Dendritic cell treated with granulocyte-macrophage colony-stimulating factor and Interleukin-4, amounts not matched to agents 40 ng/mL and 50 ng/mL, for 4 days (primary cell): ENCODE measurements at regions of chr11 and their contacts with region 1.

Region 1: DNA sequence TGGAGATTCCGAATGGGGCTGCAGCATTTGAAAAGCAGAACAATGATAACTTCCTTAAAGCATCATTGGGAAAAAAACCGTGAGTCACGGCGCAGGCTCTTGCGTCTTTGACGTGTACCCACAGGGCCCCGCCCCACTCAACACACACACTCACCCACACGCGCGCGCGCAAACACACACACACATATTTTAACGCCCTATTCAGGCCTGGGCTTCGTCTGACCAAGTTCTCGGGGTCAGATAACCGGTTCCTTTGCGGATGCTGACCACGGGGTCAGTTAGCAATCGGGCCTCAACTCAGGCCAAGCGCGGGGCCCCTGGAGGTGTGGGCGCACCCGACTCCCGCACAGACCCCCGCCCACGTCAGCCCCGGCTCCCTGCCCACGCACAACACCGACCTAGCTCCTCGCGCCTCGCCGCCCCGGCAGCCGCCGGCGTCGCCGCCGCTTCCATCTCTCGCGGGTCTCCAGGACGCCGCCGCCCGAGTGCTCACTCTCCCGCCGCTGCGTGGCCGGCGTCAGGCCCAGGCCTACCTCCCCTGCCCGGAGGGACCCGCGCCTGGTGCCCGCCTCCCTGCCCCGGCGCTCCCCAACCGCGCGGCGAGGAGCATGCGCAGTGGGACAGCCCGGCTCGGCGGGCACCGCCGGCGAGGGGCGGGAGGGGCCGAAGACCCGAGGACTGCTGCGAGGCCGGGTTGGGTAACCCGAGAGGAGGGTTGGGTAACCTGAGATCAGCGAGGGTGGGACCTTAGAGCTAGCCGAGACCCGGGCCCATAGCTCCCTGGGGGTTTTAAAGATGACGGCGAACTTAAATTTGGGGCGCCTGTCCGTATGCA is at the start of gene SLC36A4:
- H3K4me3 Mint-ChIP-seq: peak within 1 kb of the TSS; percentile 87
- H3K27ac Mint-ChIP-seq: peak within 1 kb of the TSS; percentile 96
- H3K4me1 Mint-ChIP-seq: peaks cover 50% of the 10 kb centered on the region
- H3K27me3 Mint-ChIP-seq: no peaks in the 10 kb centered on the region

Region 2: DNA sequence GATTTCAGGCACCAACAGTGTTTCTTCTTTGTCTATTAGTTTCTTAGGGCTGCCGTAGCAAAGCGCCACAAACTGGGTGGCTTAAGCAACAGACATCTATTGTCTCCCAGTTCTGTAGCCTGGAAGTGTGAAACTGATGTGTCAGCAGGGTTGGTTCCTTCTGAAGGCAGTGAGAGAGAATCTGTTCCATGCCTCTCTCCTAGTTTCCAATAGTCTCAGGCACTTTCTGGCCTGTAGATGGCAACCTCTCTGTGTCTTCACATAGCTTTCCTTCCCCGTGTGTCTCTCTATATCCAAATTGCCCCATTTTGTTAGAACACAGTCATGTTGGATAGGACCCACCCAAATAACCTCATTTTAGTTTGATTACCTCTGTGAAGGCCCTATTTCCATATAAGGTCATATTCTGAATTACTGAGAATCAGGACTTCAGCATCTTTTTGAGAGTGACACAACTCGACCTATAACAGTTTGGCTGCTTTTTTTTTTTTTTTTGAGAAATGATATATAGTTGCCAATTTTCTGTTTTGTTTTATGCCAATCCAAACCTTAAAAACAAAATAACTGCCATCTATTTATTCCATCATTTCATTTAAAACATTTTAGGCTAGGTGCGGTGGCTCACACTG is 108.0 kb before region 1 on chr11:
- intact Hi-C with region 1: loop called (anchors 10 kb)
- H3K4me3 Mint-ChIP-seq: no peak overlapping the region
- H3K27ac Mint-ChIP-seq: no peak overlapping the region
- H3K4me1 Mint-ChIP-seq: peaks cover 10% of the 10 kb centered on the region
- H3K27me3 Mint-ChIP-seq: peaks cover 5% of the 10 kb centered on the region

Region 3: DNA sequence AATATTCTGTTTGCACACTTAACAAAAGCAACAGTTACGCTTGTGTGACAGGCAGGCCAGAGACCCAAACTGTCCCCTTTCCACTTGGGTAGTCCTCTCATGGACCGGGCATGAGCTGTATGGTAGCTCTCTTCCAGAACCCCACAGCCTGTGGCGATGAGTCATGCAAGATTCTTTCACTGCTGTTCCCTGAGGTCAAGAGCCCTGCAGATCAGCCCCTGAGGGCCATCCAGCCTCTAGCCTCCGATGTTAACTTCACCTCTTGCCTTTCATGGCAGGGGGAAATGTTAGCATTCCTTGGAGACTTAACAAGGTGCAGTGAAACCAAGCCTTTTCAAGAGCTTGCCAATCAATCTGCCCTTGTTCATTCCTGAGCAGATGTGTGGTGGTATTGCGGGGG is 69.8 kb after region 1 on chr11:
- intact Hi-C with region 1: no loop called
- H3K4me3 Mint-ChIP-seq: no peak overlapping the region
- H3K27ac Mint-ChIP-seq: no peak overlapping the region
- H3K4me1 Mint-ChIP-seq: no peaks in the 10 kb centered on the region
- H3K27me3 Mint-ChIP-seq: no peaks in the 10 kb centered on the region

Region 4: GRCh38 chr11:93295921-93296575 is 98.5 kb after region 1 on chr11:
- intact Hi-C with region 1: no loop called
- H3K4me3 Mint-ChIP-seq: no peak overlapping the region
- H3K27ac Mint-ChIP-seq: no peak overlapping the region
- H3K4me1 Mint-ChIP-seq: no peaks in the 10 kb centered on the region
- H3K27me3 Mint-ChIP-seq: no peaks in the 10 kb centered on the region

Region 5: DNA sequence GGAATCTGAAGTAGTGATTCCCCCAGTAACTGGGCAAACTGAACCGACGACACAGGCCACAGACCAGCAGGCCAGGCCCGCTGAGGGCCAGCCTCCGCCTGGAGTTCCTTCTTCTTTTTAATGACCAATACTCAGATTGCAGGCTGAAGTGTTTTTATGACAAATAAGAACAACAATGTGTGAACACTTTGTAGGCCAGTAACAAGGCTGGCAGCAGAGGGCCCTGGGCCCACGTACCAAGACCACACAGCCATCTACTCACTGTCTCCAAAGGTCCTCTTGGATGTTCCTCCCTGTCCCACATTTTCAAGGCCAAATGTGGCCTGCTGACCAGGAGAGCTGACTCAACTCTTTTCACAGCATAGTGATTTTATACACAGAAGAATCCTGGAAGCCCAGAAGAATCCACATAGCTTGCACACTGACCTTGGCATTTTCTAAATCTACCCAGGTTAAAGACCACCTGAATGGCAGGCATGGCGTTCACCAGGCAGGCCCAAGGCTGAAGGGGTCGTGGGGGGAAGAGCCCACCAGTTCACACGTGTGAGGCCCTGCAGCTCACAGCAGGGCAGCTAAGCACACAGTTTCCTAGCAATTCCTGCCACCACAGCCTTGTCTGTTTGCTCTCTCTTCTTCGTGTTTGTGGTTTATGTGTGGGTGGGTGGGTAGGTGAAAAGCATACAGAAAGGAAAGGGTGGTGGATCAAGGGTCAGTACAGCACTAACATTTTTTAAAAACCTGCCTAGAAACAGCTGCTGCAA is 332.3 kb after region 1 on chr11:
- intact Hi-C with region 1: loop called (anchors 5 kb)
- H3K4me3 Mint-ChIP-seq: peak overlapping the region; percentile 13
- H3K27ac Mint-ChIP-seq: peak overlapping the region; percentile 91
- H3K4me1 Mint-ChIP-seq: peaks cover 78% of the 10 kb centered on the region
- H3K27me3 Mint-ChIP-seq: no peaks in the 10 kb centered on the region

Region 6: GRCh38 chr11:93662177-93662575 is 464.6 kb after region 1 on chr11:
- intact Hi-C with region 1: loop called (anchors 1 kb)
- H3K4me3 Mint-ChIP-seq: peak overlapping the region; percentile 84
- H3K27ac Mint-ChIP-seq: peak overlapping the region; percentile 81
- H3K4me1 Mint-ChIP-seq: no peaks in the 10 kb centered on the region
- H3K27me3 Mint-ChIP-seq: no peaks in the 10 kb centered on the region

Region 7: DNA sequence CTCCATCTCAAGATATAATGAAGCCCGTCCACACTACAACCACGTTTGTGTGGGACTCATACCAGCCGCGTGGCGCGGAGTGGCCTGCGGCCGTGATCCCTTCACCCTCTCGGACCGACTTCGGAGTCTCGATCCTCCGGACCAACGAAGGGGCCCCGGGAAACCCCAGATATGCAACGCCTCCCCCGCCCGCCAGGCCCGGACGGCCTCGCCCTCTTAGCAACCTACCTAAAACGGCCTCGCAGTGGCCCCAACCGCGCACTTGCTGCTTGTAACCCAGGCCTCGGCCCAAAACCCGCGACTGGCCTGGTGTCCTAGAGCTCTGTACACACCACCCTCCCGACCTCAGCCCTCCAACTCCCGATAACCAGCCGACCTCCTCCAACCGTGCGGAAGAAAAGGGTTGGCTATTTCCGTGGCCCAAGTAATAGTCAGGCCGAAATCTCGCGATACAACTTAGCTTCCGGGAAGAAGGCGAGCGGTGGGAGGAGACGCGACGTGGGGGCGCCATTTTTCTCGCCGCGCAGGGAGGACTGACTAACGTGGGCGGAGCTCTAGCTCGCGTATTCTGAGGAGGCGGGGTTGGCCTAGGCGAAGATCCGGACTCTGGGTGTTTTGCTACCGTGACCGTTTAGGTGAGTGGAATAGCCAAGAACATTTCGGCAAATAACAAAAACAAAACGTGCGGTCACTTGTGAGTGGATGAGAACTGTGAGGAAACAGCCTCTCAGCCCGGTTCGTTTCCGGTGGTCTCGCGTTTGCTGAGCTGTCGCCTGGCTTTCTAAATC is 543.7 kb after region 1 on chr11 and contains the starts of genes C11orf54 and TAF1D:
- intact Hi-C with region 1: loop called (anchors 5 kb)
- H3K4me3 Mint-ChIP-seq: peak within 1 kb of the TSS; percentile 99
- H3K27ac Mint-ChIP-seq: peak within 1 kb of the TSS; percentile 100
- H3K4me1 Mint-ChIP-seq: peaks cover 53% of the 10 kb centered on the region
- H3K27me3 Mint-ChIP-seq: no peaks in the 10 kb centered on the region

Region 8: GRCh38 chr11:93784152-93784934 is 586.7 kb after region 1 on chr11 and contains the start of gene MED17:
- intact Hi-C with region 1: loop called (anchors 10 kb)
- H3K4me3 Mint-ChIP-seq: peak within 1 kb of the TSS; percentile 88
- H3K27ac Mint-ChIP-seq: peak within 1 kb of the TSS; percentile 90
- H3K4me1 Mint-ChIP-seq: peaks cover 31% of the 10 kb centered on the region
- H3K27me3 Mint-ChIP-seq: no peaks in the 10 kb centered on the region

Region 9: GRCh38 chr11:94128746-94129511 is 931.3 kb after region 1 on chr11 and contains the start of gene PANX1:
- intact Hi-C with region 1: loop called (anchors 5 kb)
- H3K4me3 Mint-ChIP-seq: no peak within 1 kb of the TSS
- H3K27ac Mint-ChIP-seq: no peak within 1 kb of the TSS
- H3K4me1 Mint-ChIP-seq: peaks cover 26% of the 10 kb centered on the region
- H3K27me3 Mint-ChIP-seq: peaks cover 2% of the 10 kb centered on the region